ENCODE measurements at regions of chrX and their contacts with region 1.

Region 1: DNA sequence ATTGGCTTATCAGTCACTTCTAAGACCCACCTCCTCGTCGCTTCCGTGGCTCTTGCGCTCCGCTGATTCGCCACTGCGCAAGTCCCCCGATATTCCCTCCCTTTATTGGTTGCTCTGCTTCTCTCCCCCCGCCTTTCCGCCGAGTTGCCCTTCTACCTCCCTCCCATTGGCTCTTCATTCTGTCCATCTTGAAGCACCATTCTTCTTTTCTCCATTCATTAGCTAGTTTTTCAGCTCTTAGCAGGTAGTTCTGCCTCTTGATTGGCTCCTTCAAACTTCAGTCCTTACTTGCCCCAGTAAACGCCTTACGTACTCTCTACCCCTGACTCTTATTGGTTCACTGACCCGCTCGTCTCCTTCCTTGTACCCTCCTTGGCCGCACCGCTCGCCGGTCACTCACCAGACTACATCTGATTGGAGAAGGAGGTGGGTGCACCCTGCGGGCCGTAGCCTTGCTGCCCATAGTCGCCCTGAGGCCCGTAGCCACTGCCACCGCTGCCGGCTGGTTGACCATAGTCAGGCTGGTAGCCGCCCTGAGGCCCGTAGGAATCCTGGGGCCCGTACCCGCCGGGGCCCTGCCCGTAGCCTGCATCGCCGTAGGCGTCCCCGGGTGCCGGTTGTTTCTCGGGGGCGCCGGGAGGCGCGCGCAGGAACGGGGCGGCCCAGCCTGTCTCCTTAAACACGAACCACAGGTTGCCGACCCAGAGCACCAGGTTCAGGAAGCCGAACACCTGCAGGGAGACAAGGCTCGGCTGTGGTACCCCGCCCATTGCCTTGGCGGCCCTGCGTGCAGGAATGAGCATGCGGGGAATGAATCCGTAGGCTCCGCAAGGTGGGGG is 5.1 kb upstream of the PRICKLE3 start:
- DNase-seq: peak; percentile 57
- ATAC-seq: peak; percentile 86
- H3K4me3 Mint-ChIP-seq: peak overlapping the region; percentile 92
- H3K27ac Mint-ChIP-seq: peak overlapping the region; percentile 96
- H3K4me1 Mint-ChIP-seq: peaks cover 29% of the 10 kb centered on the region
- H3K27me3 Mint-ChIP-seq: no peaks in the 10 kb centered on the region
- CTCF ChIP-seq: no peak

Region 2: GRCh38 chrX:48917139-48918001 is 273.9 kb before region 1 on chrX:
- CTCF ChIA-PET with region 1: no interaction called
- POLR2A ChIA-PET with region 1: no interaction called
- intact Hi-C with region 1: loop called (anchors 10 kb)
- DNase-seq: peak; percentile 71
- ATAC-seq: peak; percentile 46
- H3K4me3 Mint-ChIP-seq: peak overlapping the region; percentile 97
- H3K27ac Mint-ChIP-seq: peak overlapping the region; percentile 95
- H3K4me1 Mint-ChIP-seq: peaks cover 54% of the 10 kb centered on the region
- H3K27me3 Mint-ChIP-seq: no peaks in the 10 kb centered on the region
- CTCF ChIP-seq: peak; percentile 22

Region 3: DNA sequence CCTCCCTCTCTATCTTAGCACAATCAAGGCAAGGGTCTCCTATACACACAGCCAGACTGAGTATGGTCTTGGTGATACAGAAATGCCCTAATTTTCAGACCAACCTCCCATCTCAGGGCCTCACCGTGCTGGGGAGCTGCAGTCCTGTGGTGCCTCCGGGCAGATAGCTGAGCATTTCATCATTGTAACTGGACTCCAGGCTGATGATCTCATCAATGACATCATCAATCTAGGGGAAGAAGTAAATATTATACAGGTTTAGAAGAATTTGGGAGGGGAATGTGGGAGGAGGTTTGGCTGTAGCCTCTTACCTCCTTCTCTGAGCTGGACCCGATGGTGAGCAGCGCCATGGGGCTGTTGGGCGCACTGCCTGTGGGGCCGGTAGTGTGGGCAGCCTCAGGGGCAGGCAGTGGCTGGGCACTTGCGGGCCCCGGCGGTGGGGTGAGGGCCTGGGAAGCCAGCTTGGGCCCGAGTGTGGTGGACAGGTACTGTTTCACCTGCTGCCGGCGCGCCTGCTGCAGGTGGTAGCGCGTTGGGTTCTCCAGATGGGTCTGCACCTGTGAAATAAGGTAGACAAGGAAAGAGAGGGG is 153.3 kb before region 1 on chrX:
- CTCF ChIA-PET with region 1: no interaction called
- POLR2A ChIA-PET with region 1: no interaction called
- intact Hi-C with region 1: no loop called
- DNase-seq: no peak
- ATAC-seq: no peak
- H3K4me3 Mint-ChIP-seq: no peak overlapping the region
- H3K27ac Mint-ChIP-seq: no peak overlapping the region
- H3K4me1 Mint-ChIP-seq: peaks cover 36% of the 10 kb centered on the region
- H3K27me3 Mint-ChIP-seq: no peaks in the 10 kb centered on the region
- CTCF ChIP-seq: no peak

Region 4: GRCh38 chrX:49100704-49101628 is 90.3 kb before region 1 on chrX:
- CTCF ChIA-PET with region 1: no interaction called
- POLR2A ChIA-PET with region 1: no interaction called
- intact Hi-C with region 1: loop called (anchors 2 kb)
- DNase-seq: peak; percentile 78
- ATAC-seq: peak; percentile 92
- H3K4me3 Mint-ChIP-seq: peak overlapping the region; percentile 90
- H3K27ac Mint-ChIP-seq: peak overlapping the region; percentile 95
- H3K4me1 Mint-ChIP-seq: peaks cover 9% of the 10 kb centered on the region
- H3K27me3 Mint-ChIP-seq: no peaks in the 10 kb centered on the region
- CTCF ChIP-seq: no peak

Region 5: GRCh38 chrX:49155900-49156837 is 35.1 kb before region 1 on chrX:
- CTCF ChIA-PET with region 1: interaction called, 7 read pairs
- POLR2A ChIA-PET with region 1: interaction called, 13 read pairs
- intact Hi-C with region 1: loop called (anchors 5 kb)
- DNase-seq: peak; percentile 78
- ATAC-seq: peak; percentile 91
- H3K4me3 Mint-ChIP-seq: peak overlapping the region; percentile 93
- H3K27ac Mint-ChIP-seq: peak overlapping the region; percentile 93
- H3K4me1 Mint-ChIP-seq: peaks cover 20% of the 10 kb centered on the region
- H3K27me3 Mint-ChIP-seq: no peaks in the 10 kb centered on the region
- CTCF ChIP-seq: no peak

Region 6: GRCh38 chrX:49172280-49172780 is 18.9 kb before region 1 on chrX:
- CTCF ChIA-PET with region 1: interaction called, 10 read pairs
- POLR2A ChIA-PET with region 1: interaction called, 48 read pairs
- intact Hi-C with region 1: loop called (anchors 1 kb)
- DNase-seq: peak; percentile 57
- ATAC-seq: peak; percentile 67
- H3K4me3 Mint-ChIP-seq: peak overlapping the region; percentile 89
- H3K27ac Mint-ChIP-seq: peak overlapping the region; percentile 84
- H3K4me1 Mint-ChIP-seq: peaks cover 37% of the 10 kb centered on the region
- H3K27me3 Mint-ChIP-seq: no peaks in the 10 kb centered on the region
- CTCF ChIP-seq: no peak

Region 7: DNA sequence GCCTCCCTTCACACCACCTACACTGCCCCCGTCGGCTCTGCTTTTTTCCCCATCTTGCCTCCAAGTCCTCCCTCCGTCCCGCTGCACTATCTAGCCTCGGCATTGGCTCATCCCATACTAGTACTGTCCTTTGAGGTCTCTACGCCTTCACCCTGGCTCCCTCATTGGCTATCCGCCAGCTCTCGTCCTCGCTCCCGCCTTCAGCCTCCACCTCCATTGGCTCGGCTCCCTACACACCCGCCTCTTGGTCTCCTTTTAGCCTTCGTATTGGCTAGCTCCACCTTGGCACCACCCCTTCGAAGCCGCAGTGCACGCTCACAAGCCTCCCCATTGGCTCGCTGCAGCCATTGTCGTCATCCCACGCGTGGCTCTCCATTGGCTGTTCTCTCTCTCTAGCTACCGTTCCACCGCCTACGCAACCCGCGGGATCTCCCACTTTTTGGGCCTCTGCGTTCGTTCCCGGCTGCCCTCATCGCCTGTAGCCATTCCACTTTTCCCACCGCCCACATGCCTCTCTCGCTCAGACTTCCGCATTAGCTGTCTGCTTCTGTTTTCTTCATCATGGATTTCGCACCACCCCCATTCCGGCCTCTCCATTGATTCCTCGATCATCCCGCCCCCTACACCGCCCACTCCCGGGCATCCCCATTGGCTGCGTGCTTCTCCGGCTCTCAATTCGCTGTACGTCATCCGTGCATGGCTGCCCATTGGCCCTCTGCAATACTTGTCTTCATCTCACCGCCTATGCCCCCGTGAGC is 77.9 kb after region 1 on chrX:
- CTCF ChIA-PET with region 1: interaction called, 4 read pairs
- POLR2A ChIA-PET with region 1: interaction called, 14 read pairs
- intact Hi-C with region 1: loop called (anchors 1 kb)
- DNase-seq: peak; percentile 76
- ATAC-seq: peak; percentile 86
- H3K4me3 Mint-ChIP-seq: peak overlapping the region; percentile 93
- H3K27ac Mint-ChIP-seq: peak overlapping the region; percentile 99
- H3K4me1 Mint-ChIP-seq: peaks cover 38% of the 10 kb centered on the region
- H3K27me3 Mint-ChIP-seq: no peaks in the 10 kb centered on the region
- CTCF ChIP-seq: no peak

Measured in activated B cell treated with CpG ODN at 0.5 μM for 24 hours (primary cell).